ENCODE measurements at regions of chr2 and their contacts with region 1.

Region 1: DNA sequence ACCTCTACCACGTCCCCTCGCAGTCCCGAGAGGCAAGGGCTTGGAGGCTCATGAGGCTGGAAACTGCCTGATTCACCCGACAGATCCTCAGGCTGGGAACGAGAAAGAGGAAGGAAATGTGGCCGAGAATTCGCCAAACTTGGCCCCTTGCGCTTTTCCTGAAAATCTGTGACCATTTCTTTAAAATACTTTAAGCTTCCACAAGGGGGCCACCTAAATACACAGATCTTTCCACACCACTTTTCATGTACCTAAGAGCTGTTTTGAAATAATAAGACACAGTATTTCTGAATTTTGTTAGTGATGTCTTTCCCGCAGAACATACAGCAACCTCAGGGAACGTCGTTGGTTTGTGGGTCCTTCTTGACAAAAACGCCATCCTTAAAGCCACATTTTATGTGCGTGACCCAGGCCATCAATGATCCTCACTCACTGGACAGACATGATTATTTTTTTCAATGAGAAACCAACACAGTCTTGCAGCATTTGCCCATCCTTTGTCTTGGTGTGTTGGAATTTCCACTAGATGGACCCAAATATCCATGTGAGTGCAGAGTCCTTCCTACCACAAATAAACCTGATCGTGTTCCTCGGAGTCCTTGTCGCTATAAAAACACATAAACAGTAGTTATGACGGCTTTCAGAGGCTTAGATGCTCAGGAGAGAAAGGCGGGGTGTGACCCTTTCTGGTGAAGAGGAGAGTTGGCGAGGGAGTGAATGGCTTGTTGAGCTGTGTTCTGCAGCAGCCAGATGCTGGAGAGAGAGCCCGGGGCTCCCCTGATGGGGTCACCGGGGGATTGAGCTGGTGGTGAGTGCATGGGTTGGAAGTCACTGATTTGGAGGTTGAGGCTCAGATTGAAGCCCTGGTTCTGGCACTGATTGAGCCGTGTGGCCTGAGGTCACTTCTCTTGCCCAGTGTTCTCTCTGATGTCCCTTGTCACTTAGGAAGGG is 25.0 kb downstream of the DCDC2C start:
- DNase-seq: peak in 1 of 2 experiments; percentile 46
- H3K4me3 ChIP-seq: no peak overlapping the region
- H3K4me3 Mint-ChIP-seq: no peak overlapping the region
- H3K27ac Mint-ChIP-seq: no peak overlapping the region
- H3K4me1 ChIP-seq: no peaks in the 10 kb centered on the region
- H3K4me1 Mint-ChIP-seq: no peaks in the 10 kb centered on the region
- H3K27me3 ChIP-seq: 0 out of 2 replicates have a peak, but pooled peaks cover 2% of the 10 kb centered on the region
- H3K27me3 Mint-ChIP-seq: peaks cover 38% of the 10 kb centered on the region
- CTCF ChIP-seq: peak; percentile 56 to 66

Region 2: DNA sequence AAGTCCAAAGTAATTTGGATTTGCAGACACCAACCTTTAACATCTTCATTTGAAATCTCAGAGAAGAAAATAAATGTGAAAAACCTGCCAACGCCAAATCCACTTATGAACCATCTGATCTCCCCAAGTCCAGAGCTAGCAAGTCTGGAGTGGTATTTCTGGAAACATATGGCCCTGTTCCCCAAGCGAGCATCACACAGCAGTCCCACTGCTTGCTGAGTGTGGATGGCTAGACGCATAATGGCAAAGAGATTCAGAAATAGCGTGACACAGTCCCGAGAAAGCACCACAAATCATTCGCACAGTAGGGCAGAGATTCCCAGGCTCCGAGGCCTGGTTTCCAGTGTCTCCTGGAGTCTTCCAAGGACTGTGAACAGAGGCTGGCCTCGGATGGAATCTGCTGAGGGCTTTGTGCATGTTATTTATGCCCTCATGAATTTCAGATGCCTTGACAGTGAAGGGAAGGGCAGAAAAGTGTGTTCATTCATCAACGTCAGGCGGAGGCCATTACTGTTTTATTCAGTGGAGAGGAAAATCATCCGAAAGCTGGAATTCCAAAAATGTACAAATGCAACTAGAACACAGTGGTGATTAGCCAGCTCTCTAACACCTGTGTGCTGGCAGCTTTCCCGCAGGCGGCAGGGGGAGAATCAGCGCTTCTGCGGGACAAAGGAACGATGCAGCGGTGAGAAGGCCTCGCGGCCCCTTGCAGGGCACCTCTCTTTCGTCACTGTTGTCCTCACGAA is 767.8 kb before region 1 on chr2:
- CTCF ChIA-PET with region 1: no interaction called
- POLR2A ChIA-PET with region 1: no interaction called
- intact Hi-C with region 1: no loop called
- DNase-seq: no peak
- H3K4me3 ChIP-seq: no peak overlapping the region
- H3K4me3 Mint-ChIP-seq: no peak overlapping the region
- H3K27ac Mint-ChIP-seq: no peak overlapping the region
- H3K4me1 ChIP-seq: no peaks in the 10 kb centered on the region
- H3K4me1 Mint-ChIP-seq: no peaks in the 10 kb centered on the region
- H3K27me3 ChIP-seq: no peaks in the 10 kb centered on the region
- H3K27me3 Mint-ChIP-seq: peaks cover 2% of the 10 kb centered on the region
- CTCF ChIP-seq: no peak

Region 3: DNA sequence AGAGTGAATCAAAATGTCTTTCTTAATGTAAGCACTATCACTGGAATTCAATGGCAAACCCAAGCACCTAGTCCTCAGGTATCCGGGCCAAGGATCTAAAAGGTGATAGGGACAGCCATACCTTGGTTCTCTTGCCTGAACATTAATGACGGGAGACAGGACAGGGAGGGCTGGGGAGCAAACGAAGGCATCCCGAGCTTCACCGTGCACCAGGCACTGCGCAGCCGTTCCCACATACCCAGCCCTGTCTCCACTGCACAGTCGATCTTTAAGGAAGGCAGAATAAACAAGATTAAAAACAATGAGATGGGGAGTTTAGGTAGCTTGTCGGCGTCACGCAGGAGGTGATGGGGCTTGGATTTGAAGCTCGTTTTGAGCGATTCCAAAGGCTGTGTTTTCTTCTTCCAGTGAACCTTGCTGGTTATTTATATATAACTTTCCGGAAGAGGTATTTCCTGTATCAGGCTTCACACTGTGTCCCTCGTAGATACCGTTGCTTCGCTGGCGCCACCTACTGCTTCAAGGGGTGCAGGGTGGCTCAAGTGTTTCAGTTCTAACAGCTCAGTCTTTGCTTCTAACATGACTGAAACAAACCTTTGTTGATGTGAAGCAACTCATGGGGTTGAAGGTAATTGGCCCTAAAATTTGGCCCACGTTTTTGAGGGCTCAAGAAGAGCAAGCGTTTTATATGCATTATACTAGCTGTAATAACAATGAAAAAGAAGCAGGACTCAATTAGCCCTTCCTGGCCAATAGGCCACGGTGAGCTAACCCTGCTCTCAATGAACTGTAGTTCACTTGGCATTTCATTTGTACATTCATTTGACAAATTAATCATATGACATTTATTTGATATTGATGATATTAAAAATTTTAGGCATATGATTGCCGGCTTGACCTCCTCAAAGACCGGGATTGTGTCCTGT is 52.4 kb after region 1 on chr2:
- CTCF ChIA-PET with region 1: interaction called, 27 read pairs
- POLR2A ChIA-PET with region 1: no interaction called
- intact Hi-C with region 1: loop called (anchors 1 kb)
- DNase-seq: peak; percentile 54
- H3K4me3 ChIP-seq: no peak overlapping the region
- H3K4me3 Mint-ChIP-seq: no peak overlapping the region
- H3K27ac Mint-ChIP-seq: no peak overlapping the region
- H3K4me1 ChIP-seq: no peaks in the 10 kb centered on the region
- H3K4me1 Mint-ChIP-seq: no peaks in the 10 kb centered on the region
- H3K27me3 ChIP-seq: no peaks in the 10 kb centered on the region
- H3K27me3 Mint-ChIP-seq: peaks cover 26% of the 10 kb centered on the region
- CTCF ChIP-seq: peak; percentile 19 to 69

Region 4: GRCh38 chr2:3805201-3805939 is 77.0 kb after region 1 on chr2:
- CTCF ChIA-PET with region 1: interaction called, 16 read pairs
- POLR2A ChIA-PET with region 1: no interaction called
- intact Hi-C with region 1: loop called (anchors 1 kb)
- DNase-seq: peak; percentile 54 to 58
- H3K4me3 ChIP-seq: no peak overlapping the region
- H3K4me3 Mint-ChIP-seq: no peak overlapping the region
- H3K27ac Mint-ChIP-seq: no peak overlapping the region
- H3K4me1 ChIP-seq: no peaks in the 10 kb centered on the region
- H3K4me1 Mint-ChIP-seq: no peaks in the 10 kb centered on the region
- H3K27me3 ChIP-seq: no peaks in the 10 kb centered on the region
- H3K27me3 Mint-ChIP-seq: peaks cover 4% of the 10 kb centered on the region
- CTCF ChIP-seq: peak; percentile 41 to 66

Region 5: DNA sequence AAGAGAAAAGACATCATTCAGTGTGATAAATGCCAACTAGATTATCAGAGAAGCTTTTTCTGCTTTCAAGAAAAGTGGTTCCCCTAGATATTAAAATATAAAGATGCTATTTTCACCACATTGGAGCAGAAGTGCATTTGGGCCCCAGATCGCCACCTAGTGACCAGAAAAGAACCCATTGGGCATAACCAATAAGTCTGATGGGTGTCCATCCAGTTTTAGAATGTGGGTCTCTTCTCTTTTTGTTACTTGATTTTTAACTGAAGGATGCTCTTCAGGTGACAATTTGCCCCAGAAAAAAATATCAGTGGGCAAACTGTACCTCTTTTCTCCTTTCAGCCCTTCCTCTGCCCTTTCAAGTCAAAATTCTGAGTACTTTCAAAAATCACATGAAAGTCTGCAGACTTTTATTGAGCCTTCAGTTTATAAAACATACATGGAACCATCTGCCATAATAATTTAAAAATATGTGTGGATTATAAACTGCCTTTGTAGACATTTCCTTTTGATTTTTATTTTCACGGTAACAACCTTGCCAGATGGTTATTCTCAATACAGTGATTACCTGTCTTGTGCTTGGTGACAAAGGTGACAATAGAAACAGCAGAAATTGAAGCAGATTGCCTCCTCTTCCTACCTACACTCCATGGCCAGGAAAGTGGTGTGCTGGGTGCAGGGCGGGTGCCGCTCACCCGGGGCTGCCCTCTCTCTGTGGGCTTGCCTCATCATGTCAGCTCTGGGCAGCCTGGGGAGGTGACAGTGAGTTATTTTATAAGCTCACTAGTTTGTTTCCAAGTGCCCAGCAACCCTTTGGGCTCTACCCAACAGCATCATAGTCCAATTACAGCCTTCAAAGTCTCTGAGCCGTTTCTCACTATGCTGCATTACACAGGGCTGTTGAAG is 99.5 kb after region 1 on chr2:
- CTCF ChIA-PET with region 1: interaction called, 3 read pairs
- POLR2A ChIA-PET with region 1: no interaction called
- intact Hi-C with region 1: loop called (anchors 1 kb)
- DNase-seq: peak in 1 of 2 experiments; percentile 28
- H3K4me3 ChIP-seq: no peak overlapping the region
- H3K4me3 Mint-ChIP-seq: no peak overlapping the region
- H3K27ac Mint-ChIP-seq: no peak overlapping the region
- H3K4me1 ChIP-seq: no peaks in the 10 kb centered on the region
- H3K4me1 Mint-ChIP-seq: no peaks in the 10 kb centered on the region
- H3K27me3 ChIP-seq: no peaks in the 10 kb centered on the region
- H3K27me3 Mint-ChIP-seq: peaks cover 20% of the 10 kb centered on the region
- CTCF ChIP-seq: peak; percentile 28 to 61

Region 6: DNA sequence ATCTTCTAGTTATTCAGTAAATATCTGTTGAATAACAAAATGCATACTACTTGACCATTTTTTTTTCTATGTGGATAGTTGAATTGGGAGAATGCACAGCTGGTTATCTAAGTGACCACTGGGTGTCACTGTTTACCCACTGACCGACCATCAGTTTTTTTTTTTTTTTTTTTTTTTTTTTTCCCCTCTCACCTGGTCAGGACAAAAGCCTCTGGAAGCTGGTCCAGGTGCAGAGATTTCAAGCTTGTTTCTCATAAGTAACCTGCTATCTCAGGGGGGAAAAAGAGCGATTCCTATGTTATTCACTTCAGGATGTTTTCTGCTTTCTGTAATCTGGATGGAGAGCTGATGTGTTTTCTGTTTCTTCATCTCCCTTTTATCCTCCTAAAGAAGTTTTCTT is 231.0 kb after region 1 on chr2:
- CTCF ChIA-PET with region 1: no interaction called
- POLR2A ChIA-PET with region 1: no interaction called
- intact Hi-C with region 1: loop called (anchors 10 kb)
- DNase-seq: peak in 1 of 2 experiments; percentile 36
- H3K4me3 ChIP-seq: no peak overlapping the region
- H3K4me3 Mint-ChIP-seq: no peak overlapping the region
- H3K27ac Mint-ChIP-seq: no peak overlapping the region
- H3K4me1 ChIP-seq: no peaks in the 10 kb centered on the region
- H3K4me1 Mint-ChIP-seq: no peaks in the 10 kb centered on the region
- H3K27me3 ChIP-seq: no peaks in the 10 kb centered on the region
- H3K27me3 Mint-ChIP-seq: peaks cover 6% of the 10 kb centered on the region
- CTCF ChIP-seq: peak; percentile 69 to 86

Region 7: DNA sequence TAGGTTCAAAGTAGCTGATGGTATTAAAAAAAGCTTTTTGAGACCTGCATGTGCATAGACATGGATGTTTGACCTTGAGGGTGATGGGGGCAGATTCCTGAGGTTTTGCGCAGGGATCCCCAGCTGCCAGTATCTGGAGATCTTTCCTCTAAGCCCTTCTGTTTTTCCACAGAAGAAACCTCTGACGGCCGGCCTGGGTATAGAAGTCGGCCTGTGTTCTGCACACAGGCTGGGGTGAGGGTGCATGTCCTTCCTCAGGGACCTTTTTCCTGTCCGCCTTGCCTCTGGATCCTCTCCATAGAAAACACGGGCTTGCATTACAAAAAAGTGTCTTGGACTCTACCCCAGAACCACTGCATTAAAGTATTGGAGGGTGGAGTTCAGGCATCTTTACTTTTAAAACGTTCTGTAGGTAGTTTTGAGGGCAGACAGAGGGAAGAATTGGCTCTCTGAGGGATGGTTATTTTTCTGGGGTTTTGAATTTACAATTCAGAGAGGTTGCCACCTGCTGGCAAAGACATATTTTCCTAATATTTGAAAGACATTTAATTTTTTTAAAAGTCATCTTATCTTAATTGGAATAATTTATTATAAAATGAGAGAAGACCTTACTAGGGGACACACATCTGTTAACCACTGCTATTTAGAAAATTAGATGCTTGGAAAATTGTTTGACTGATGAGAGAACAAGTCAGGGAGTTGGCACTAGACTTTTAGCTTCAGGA is 325.6 kb after region 1 on chr2:
- CTCF ChIA-PET with region 1: no interaction called
- POLR2A ChIA-PET with region 1: no interaction called
- intact Hi-C with region 1: loop called (anchors 5 kb)
- DNase-seq: no peak
- H3K4me3 ChIP-seq: no peak overlapping the region
- H3K4me3 Mint-ChIP-seq: no peak overlapping the region
- H3K27ac Mint-ChIP-seq: no peak overlapping the region
- H3K4me1 ChIP-seq: no peaks in the 10 kb centered on the region
- H3K4me1 Mint-ChIP-seq: no peaks in the 10 kb centered on the region
- H3K27me3 ChIP-seq: no peaks in the 10 kb centered on the region
- H3K27me3 Mint-ChIP-seq: peaks cover 3% of the 10 kb centered on the region
- CTCF ChIP-seq: peak in 1 of 2 experiments; percentile 30